Tibial artery (tissue), 4 donors: ENCODE measurements at regions of chr6 and their contacts with region 1.

Region 1: GRCh38 chr6:3456755-3457466 is at the start of gene SLC22A23:
- DNase-seq: peak; percentile 34 to 76
- H3K4me3 ChIP-seq: peak within 1 kb of the TSS; percentile 57 to 71
- H3K27ac ChIP-seq: peak within 1 kb of the TSS; percentile 9 to 53
- H3K4me1 ChIP-seq: peaks cover 0 to 35% (median 22%) of the 10 kb centered on the region in 4 donors
- H3K27me3 ChIP-seq: no peaks in the 10 kb centered on the region
- CTCF ChIP-seq: peak; percentile 56 to 82

Region 2: DNA sequence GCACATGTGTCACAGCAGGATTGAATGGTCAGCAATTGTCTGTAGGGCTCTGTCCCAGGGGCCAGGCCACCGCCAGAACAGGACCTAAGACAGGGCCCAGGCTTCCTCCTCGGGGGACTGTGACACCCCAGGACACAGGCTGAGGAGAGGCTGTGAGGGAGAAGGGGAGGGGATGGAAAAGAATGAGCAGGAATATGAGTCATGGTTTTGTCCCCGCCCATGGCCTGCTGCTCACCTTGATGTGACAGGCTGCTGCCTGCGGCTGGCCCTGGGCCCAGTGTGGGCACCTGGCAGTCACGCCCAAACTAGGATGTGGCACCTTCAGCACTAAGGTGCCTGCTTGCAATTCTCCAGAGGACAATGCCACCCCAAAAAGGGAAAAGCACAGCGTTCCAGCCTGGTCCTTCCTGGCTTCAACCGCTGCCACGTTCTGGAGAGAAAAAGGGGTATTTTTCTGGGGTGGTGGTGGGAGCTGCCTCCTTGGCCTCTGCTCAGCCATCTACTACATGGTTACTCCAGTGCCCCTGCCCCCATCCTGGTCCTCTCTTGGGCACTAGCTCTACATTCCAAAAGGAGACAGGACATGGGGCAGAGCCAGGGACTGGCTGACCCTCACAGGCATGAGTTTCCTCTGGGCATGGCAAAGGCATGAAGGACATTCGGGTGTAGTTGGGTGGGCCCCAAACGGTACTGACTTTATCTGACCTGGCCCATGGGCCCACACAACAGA is 93.5 kb before region 1 on chr6:
- intact Hi-C with region 1: no loop called
- DNase-seq: no peak
- H3K4me3 ChIP-seq: no peak overlapping the region
- H3K27ac ChIP-seq: no peak overlapping the region
- H3K4me1 ChIP-seq: no peaks in the 10 kb centered on the region
- H3K27me3 ChIP-seq: no peaks in the 10 kb centered on the region
- CTCF ChIP-seq: no peak

Region 3: GRCh38 chr6:3724451-3725108 is 267.7 kb after region 1 on chr6:
- intact Hi-C with region 1: loop called (anchors 5 kb)
- DNase-seq: peak; percentile 48 to 89
- H3K4me3 ChIP-seq: no peak overlapping the region
- H3K27ac ChIP-seq: peak overlapping the region; percentile 64 to 75
- H3K4me1 ChIP-seq: peaks cover 0 to 80% (median 65%) of the 10 kb centered on the region in 4 donors
- H3K27me3 ChIP-seq: no peaks in the 10 kb centered on the region
- CTCF ChIP-seq: no peak

Region 4: GRCh38 chr6:3898265-3898994 is 441.5 kb after region 1 on chr6:
- intact Hi-C with region 1: no loop called
- DNase-seq: no peak
- H3K4me3 ChIP-seq: no peak overlapping the region
- H3K27ac ChIP-seq: no peak overlapping the region
- H3K4me1 ChIP-seq: peaks cover 0 to 13% (median 8%) of the 10 kb centered on the region in 4 donors
- H3K27me3 ChIP-seq: no peaks in the 10 kb centered on the region
- CTCF ChIP-seq: no peak